Activated naive CD4-positive, alpha-beta T cell treated with anti-CD3 and anti-CD28 coated beads for 36 hours (primary cell): ENCODE measurements at regions of chr2 and their contacts with region 1.

Region 1: DNA sequence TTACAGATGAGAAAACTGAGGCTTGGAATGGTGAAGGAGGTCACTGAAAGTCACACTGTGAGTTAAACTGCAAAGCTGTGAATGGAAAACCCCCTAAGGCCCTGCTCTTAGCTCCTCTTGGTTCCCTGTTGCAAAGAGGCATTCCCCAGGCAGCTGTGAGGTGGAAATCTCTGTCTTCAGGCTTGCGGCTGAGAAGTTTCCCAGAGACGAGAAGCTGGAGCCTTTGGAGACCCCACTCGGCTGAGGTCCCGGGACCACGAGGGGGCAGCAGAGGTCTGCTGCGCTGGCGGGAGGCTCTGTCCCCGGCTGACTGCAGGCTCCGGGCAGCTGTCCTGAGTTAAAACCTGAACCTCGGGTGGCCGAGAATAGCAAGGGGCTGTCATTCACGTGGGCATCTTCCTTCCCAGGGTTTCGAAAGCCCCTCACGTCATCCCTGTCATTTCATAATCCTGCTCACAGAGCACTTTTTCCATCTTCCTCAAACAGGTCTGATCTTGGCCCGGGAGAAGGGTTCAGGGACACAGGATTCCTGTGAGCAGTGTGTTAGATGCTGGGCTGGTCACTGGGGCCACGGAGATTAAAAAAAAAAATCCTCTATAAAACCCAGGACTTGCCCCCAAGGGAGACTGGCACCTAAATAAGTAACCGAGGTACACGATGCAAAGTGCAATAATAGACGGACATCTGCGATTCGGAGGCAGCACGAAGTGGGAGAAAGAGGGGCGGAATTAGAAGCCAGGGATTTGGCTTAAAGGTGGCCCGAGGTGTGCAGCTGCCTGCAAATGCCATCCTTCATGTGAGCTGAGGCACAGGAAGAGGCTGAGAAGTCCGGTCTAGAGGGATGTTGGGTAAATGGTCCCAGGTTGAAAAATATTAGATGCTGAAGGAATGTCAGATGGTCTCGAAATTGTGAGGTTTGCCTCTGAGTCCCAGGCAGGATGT is 24.6 kb upstream of the ATOH8 start:
- DNase-seq: peak; percentile 81
- H3K4me3 Mint-ChIP-seq: no peak overlapping the region
- H3K27ac Mint-ChIP-seq: no peak overlapping the region
- H3K4me1 Mint-ChIP-seq: peaks cover 4% of the 10 kb centered on the region
- H3K27me3 Mint-ChIP-seq: peaks cover 2% of the 10 kb centered on the region

Region 2: GRCh38 chr2:85302121-85302520 is 427.0 kb before region 1 on chr2:
- CTCF ChIA-PET with region 1: no interaction called
- intact Hi-C with region 1: no loop called
- DNase-seq: no peak
- H3K4me3 Mint-ChIP-seq: no peak overlapping the region
- H3K27ac Mint-ChIP-seq: no peak overlapping the region
- H3K4me1 Mint-ChIP-seq: peaks cover 13% of the 10 kb centered on the region
- H3K27me3 Mint-ChIP-seq: no peaks in the 10 kb centered on the region

Region 3: DNA sequence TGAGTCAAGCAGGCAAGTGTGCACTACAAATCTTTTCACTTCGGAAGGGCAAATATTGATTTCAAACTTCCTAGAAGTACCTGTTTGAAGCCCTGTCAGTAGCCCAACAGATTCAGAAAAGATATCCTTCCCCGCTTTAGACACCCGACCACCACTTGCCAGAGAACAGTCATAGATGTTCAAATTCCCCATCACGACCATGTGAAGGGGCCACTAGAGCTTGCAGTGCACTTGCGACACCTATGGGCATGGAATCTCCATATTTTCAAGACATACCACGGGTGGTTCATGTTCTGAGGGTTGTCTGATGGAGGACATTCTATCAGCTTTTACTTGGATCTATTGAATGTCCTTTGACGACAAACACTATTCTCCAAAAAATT is 11.2 kb before region 1 on chr2:
- CTCF ChIA-PET with region 1: interaction called, 17 read pairs
- intact Hi-C with region 1: no loop called
- DNase-seq: no peak
- H3K4me3 Mint-ChIP-seq: no peak overlapping the region
- H3K27ac Mint-ChIP-seq: no peak overlapping the region
- H3K4me1 Mint-ChIP-seq: peaks cover 5% of the 10 kb centered on the region
- H3K27me3 Mint-ChIP-seq: no peaks in the 10 kb centered on the region

Region 4: GRCh38 chr2:85804583-85804982 is 75.4 kb after region 1 on chr2:
- CTCF ChIA-PET with region 1: interaction called, 14 read pairs
- intact Hi-C with region 1: no loop called
- DNase-seq: peak; percentile 42
- H3K4me3 Mint-ChIP-seq: no peak overlapping the region
- H3K27ac Mint-ChIP-seq: no peak overlapping the region
- H3K4me1 Mint-ChIP-seq: peaks cover 7% of the 10 kb centered on the region
- H3K27me3 Mint-ChIP-seq: no peaks in the 10 kb centered on the region

Region 5: GRCh38 chr2:85813982-85814801 is 85.0 kb after region 1 on chr2:
- CTCF ChIA-PET with region 1: interaction called, 66 read pairs
- intact Hi-C with region 1: loop called (anchors 1 kb)
- DNase-seq: peak; percentile 92
- H3K4me3 Mint-ChIP-seq: no peak overlapping the region
- H3K27ac Mint-ChIP-seq: no peak overlapping the region
- H3K4me1 Mint-ChIP-seq: no peaks in the 10 kb centered on the region
- H3K27me3 Mint-ChIP-seq: peaks cover 1% of the 10 kb centered on the region

Region 6: GRCh38 chr2:86079981-86080911 is 351.1 kb after region 1 on chr2:
- CTCF ChIA-PET with region 1: no interaction called
- intact Hi-C with region 1: loop called (anchors 10 kb)
- DNase-seq: peak; percentile 91
- H3K4me3 Mint-ChIP-seq: no peak overlapping the region
- H3K27ac Mint-ChIP-seq: no peak overlapping the region
- H3K4me1 Mint-ChIP-seq: peaks cover 16% of the 10 kb centered on the region
- H3K27me3 Mint-ChIP-seq: no peaks in the 10 kb centered on the region